ENCODE measurements at regions of chr17 and their contacts with region 1.

Region 1: GRCh38 chr17:34443619-34444469 is 80.8 kb upstream of the CCL1 start:
- DNase-seq: peak; percentile 56
- ATAC-seq: peak; percentile 88
- H3K4me3 Mint-ChIP-seq: no peak overlapping the region
- H3K27ac Mint-ChIP-seq: no peak overlapping the region
- H3K4me1 Mint-ChIP-seq: peaks cover 13% of the 10 kb centered on the region
- H3K27me3 Mint-ChIP-seq: no peaks in the 10 kb centered on the region; the same call in 1 of the 2 replicates
- CTCF ChIP-seq: peak; percentile 40; the same call in 1 of the 2 replicates

Region 2: DNA sequence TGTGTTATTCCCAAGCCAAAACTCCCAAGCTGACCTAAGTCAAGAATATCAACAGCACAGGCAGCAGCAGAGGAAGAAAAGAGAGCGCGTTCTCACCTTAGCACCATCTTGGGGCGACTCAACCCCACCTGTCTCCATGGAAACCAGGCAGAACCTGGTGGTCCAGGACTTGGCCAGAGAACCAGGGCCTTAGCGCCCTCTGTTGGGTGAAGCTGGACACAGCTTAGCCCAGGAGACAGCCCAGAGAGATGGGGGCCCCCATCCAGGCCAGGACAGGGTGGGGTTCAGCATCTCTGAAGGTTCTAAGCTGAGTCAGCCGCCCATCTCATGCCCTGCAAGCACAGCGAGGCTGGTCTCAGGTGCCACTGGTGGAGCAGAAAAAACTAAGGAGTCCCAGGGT is 75.4 kb after region 1 on chr17:
- CTCF ChIA-PET with region 1: interaction called, 14 read pairs
- POLR2A ChIA-PET with region 1: no interaction called
- DNase-seq: peak; percentile 85
- ATAC-seq: peak; percentile 96
- H3K4me3 Mint-ChIP-seq: no peak overlapping the region
- H3K27ac Mint-ChIP-seq: no peak overlapping the region
- H3K4me1 Mint-ChIP-seq: peaks cover 5% of the 10 kb centered on the region; the same call in 1 of the 2 replicates
- H3K27me3 Mint-ChIP-seq: no peaks in the 10 kb centered on the region; the same call in 1 of the 2 replicates
- CTCF ChIP-seq: peak; percentile 66